ENCODE measurements at regions of chr10 and their contacts with region 1.

Region 1: DNA sequence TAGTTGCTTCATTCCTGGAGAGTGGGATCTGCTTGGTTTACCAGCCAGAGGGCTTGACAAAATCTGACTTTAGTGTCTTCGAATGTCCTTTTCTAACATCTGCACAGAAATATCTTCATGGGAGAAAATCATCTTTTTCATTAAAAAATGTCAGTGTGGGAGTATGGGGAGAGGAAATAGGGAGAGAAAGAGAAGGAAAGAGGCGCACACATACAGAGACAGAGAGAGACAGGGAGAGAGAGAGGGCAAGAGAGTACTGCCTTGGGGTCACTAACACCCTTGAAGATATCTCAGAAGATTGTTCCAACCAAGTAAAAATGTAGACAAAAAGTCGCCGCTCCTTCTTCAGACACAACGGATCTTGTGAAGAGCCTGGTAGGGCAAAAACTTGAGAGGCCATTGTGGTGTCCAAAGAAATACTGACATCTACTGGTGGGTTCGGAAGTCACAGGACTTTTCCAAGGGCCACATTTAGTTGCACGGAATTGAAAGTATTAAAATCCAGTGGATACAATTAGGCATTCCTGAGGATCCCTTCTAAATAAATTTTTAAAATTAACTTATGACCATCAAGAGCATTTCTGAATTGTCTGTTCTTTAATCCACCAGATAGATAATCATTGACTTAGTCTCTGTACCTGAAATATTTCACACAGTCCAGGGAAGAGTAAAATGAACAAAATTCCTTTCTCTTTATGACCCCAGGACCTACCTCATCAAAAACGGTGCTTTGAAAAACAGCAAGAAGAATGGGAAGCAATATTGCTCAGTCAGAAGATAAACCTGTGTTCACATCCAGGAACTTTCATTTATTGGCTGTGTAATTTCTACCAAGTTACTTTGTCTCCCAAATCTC is 29.7 kb downstream of the VIM start:
- DNase-seq: peak; percentile 12 to 63 (median 55)
- H3K4me3 ChIP-seq: no peak overlapping the region
- H3K4me3 Mint-ChIP-seq: peak overlapping the region in 2 of 7 donors; percentile 1 to 14
- H3K27ac ChIP-seq: no peak overlapping the region
- H3K27ac Mint-ChIP-seq: no peak overlapping the region
- H3K4me1 ChIP-seq: no peaks in the 10 kb centered on the region
- H3K4me1 Mint-ChIP-seq: peaks cover 4 to 6% (median 5%) of the 10 kb centered on the region in 3 donors
- H3K27me3 ChIP-seq: no peaks in the 10 kb centered on the region
- H3K27me3 Mint-ChIP-seq: peaks cover 0 to 2% of the 10 kb centered on the region in 2 donors

Region 2: DNA sequence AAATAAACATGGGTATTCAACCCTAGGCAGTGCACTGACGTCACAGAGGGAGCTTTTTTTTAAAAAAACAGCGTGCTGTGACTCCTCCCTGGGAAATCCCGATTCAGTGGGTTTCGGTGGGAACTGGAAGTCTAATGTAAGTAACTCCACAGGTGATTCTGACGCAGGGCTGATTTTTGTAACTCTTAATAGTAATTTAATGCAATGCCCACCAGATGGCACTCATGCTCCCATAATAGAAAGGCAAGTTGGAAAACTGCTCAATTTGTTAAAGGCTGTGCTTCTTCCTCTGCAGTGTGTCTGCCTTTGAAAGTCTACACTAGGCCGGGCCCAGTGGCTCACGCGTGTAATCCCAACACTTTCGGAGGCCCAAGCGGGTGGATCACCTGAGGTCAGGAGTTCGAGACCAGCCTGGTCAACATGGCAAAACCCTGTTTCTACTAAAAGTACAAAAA is 429.6 kb before region 1 on chr10:
- CTCF ChIA-PET with region 1: interaction called, 10 read pairs
- POLR2A ChIA-PET with region 1: no interaction called
- DNase-seq: peak; percentile 30 to 70 (median 55)
- H3K4me3 ChIP-seq: no peak overlapping the region
- H3K4me3 Mint-ChIP-seq: no peak overlapping the region
- H3K27ac ChIP-seq: no peak overlapping the region
- H3K27ac Mint-ChIP-seq: peak overlapping the region in 2 of 8 donors; percentile 57 to 81
- H3K4me1 ChIP-seq: no peaks in the 10 kb centered on the region
- H3K4me1 Mint-ChIP-seq: peaks cover 0 to 5% (median 3%) of the 10 kb centered on the region in 3 donors
- H3K27me3 ChIP-seq: no peaks in the 10 kb centered on the region
- H3K27me3 Mint-ChIP-seq: peaks cover 0 to 2% of the 10 kb centered on the region in 2 donors

Region 3: GRCh38 chr10:16843252-16843870 is 414.3 kb before region 1 on chr10:
- CTCF ChIA-PET with region 1: interaction called, 12 read pairs
- POLR2A ChIA-PET with region 1: no interaction called
- DNase-seq: peak in 2 of 5 donors; percentile 57 to 62
- H3K4me3 ChIP-seq: no peak overlapping the region
- H3K4me3 Mint-ChIP-seq: no peak overlapping the region
- H3K27ac ChIP-seq: no peak overlapping the region
- H3K27ac Mint-ChIP-seq: peak overlapping the region in 1 of 8 donors; percentile 29
- H3K4me1 ChIP-seq: no peaks in the 10 kb centered on the region
- H3K4me1 Mint-ChIP-seq: peaks cover 0 to 6% (median 5%) of the 10 kb centered on the region in 3 donors
- H3K27me3 ChIP-seq: no peaks in the 10 kb centered on the region
- H3K27me3 Mint-ChIP-seq: no peaks in the 10 kb centered on the region

Region 4: DNA sequence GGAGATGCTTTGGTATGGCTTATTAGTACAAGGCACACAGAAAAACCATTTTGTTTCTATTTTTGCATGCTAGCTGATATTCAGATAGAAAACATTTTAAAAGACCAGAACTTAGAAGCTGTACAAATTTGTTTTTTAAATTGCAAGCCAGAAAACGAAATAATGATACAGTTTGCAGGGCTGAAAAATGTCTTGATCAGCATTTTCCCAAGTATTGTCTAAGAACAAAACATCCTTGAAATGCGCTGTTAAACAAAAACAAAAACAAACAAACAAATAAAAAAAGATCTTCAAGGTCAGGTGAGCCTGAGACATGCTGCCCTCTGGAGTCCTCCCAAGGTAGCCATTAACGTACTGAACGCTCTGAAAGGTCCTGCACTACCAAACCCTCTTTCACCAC is 68.7 kb after region 1 on chr10:
- CTCF ChIA-PET with region 1: no interaction called
- POLR2A ChIA-PET with region 1: no interaction called
- DNase-seq: no peak
- H3K4me3 ChIP-seq: no peak overlapping the region
- H3K4me3 Mint-ChIP-seq: no peak overlapping the region
- H3K27ac ChIP-seq: no peak overlapping the region
- H3K27ac Mint-ChIP-seq: no peak overlapping the region
- H3K4me1 ChIP-seq: no peaks in the 10 kb centered on the region
- H3K4me1 Mint-ChIP-seq: no peaks in the 10 kb centered on the region
- H3K27me3 ChIP-seq: no peaks in the 10 kb centered on the region
- H3K27me3 Mint-ChIP-seq: no peaks in the 10 kb centered on the region